Caco-2 (cell line): ENCODE measurements at regions of chr6 and their contacts with region 1.

Region 1: DNA sequence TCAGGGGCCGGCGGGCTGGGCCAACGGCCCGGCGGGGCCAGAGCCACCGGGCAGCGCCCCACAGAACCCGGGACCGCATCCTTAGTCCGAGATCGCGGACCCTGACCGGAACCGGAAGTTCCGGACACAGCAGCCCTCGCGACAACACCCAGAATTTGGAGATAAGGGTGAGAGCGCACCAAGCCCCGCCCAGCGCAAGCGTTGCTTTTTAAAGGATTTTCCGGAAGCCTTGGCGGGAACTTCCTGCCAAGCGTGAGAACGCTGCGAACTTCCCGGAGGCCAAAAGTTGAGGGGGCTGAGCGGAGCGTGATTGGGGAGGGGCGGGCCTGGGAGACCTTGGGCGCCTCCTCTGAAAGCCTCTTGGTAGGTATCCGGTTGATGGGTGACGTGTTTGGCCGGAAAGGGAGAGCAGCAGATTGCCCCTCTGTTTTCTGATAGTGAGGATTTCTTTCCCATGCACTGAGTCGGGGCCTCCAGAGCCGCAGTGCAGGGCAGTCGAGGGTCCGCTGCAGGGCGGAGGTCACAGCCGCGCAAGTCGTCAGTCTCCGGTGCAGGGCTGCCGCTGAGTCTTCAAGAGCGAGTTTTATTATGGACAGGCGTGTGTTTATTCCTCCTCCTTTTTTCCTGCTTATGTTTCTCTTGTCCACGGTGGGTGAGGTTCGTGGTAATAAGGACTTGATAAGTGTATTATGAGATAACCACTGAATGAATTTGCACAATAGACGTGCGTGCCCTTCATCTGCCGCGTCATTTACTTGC is at the start of gene MTRF1L:
- DNase-seq: peak; percentile 93 to 94
- H3K4me3 ChIP-seq: peak within 1 kb of the TSS; percentile 93
- H3K4me3 Mint-ChIP-seq: peak within 1 kb of the TSS; percentile 90
- H3K27ac Mint-ChIP-seq: peak within 1 kb of the TSS; percentile 97
- H3K4me1 ChIP-seq: no peaks in the 10 kb centered on the region
- H3K4me1 Mint-ChIP-seq: peaks cover 10% of the 10 kb centered on the region
- H3K27me3 ChIP-seq: no peaks in the 10 kb centered on the region
- H3K27me3 Mint-ChIP-seq: no peaks in the 10 kb centered on the region
- CTCF ChIP-seq: no peak
- total RNA-seq, gene MTRF1L: 24.4 and 26.3 TPM in 2 replicates

Region 2: GRCh38 chr6:152982768-152983636 is 19.8 kb before region 1 on chr6 and contains the start of gene FBXO5:
- CTCF ChIA-PET with region 1: no interaction called
- POLR2A ChIA-PET with region 1: interaction called, 6 read pairs
- intact Hi-C with region 1: loop called (anchors 2 kb)
- DNase-seq: peak; percentile 96 to 97
- H3K4me3 ChIP-seq: peak within 1 kb of the TSS; percentile 99
- H3K4me3 Mint-ChIP-seq: peak within 1 kb of the TSS; percentile 78
- H3K27ac Mint-ChIP-seq: peak within 1 kb of the TSS; percentile 92
- H3K4me1 ChIP-seq: peaks cover 15% of the 10 kb centered on the region
- H3K4me1 Mint-ChIP-seq: peaks cover 20% of the 10 kb centered on the region
- H3K27me3 ChIP-seq: no peaks in the 10 kb centered on the region
- H3K27me3 Mint-ChIP-seq: no peaks in the 10 kb centered on the region
- CTCF ChIP-seq: no peak
- total RNA-seq, gene FBXO5: 31.4 and 35.5 TPM in 2 replicates

Region 3: GRCh38 chr6:153084409-153084808 is 81.6 kb after region 1 on chr6:
- CTCF ChIA-PET with region 1: no interaction called
- POLR2A ChIA-PET with region 1: no interaction called
- intact Hi-C with region 1: no loop called
- DNase-seq: no peak
- H3K4me3 ChIP-seq: no peak overlapping the region
- H3K4me3 Mint-ChIP-seq: no peak overlapping the region
- H3K27ac Mint-ChIP-seq: no peak overlapping the region
- H3K4me1 ChIP-seq: no peaks in the 10 kb centered on the region
- H3K4me1 Mint-ChIP-seq: no peaks in the 10 kb centered on the region
- H3K27me3 ChIP-seq: no peaks in the 10 kb centered on the region
- H3K27me3 Mint-ChIP-seq: no peaks in the 10 kb centered on the region
- CTCF ChIP-seq: no peak